Activated CD4-positive, alpha-beta T cell treated with anti-CD3 and anti-CD28 coated beads for 36 hours (primary cell): ENCODE measurements at regions of chr2 and their contacts with region 1.

Region 1: DNA sequence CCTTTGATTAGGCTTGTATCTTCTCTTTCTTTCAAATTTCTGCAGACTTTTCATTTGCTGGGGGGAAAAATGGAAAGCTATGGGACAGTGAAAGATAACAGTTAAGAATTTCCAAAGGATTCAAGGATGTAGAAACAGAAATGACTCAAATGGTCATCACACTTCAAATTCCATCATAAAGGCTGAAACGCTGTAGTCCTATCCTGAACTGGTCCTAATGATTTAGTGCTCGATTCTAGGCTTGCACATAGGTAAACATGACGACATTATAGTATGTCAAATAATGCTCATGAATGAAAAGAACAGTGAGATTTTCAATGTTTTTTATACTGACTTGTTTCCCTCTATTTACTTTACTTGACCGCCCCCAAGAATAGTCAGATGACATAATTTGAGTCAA is 15.7 kb upstream of the MMADHC start:
- DNase-seq: no peak
- ATAC-seq: no peak
- H3K4me3 Mint-ChIP-seq: no peak overlapping the region
- H3K27ac Mint-ChIP-seq: no peak overlapping the region
- H3K4me1 Mint-ChIP-seq: peaks cover 10% of the 10 kb centered on the region
- H3K27me3 Mint-ChIP-seq: no peaks in the 10 kb centered on the region

Region 2: GRCh38 chr2:151238527-151239487 is 1635.6 kb after region 1 on chr2:
- CTCF ChIA-PET with region 1: interaction called, 20 read pairs
- POLR2A ChIA-PET with region 1: no interaction called
- intact Hi-C with region 1: no loop called
- DNase-seq: peak; percentile 58
- ATAC-seq: peak; percentile 74
- H3K4me3 Mint-ChIP-seq: no peak overlapping the region
- H3K27ac Mint-ChIP-seq: no peak overlapping the region
- H3K4me1 Mint-ChIP-seq: peaks cover 5% of the 10 kb centered on the region
- H3K27me3 Mint-ChIP-seq: no peaks in the 10 kb centered on the region